HepG2 (cell line): ENCODE measurements at regions of chr20 and their contacts with region 1.

Region 1: GRCh38 chr20:58839474-58839874 is 11.2 kb downstream of the GNAS-AS1 start:
- DNase-seq: peak; percentile 34
- ATAC-seq: peak; percentile 86
- H3K4me3 ChIP-seq: no peak overlapping the region
- H3K27ac ChIP-seq: no peak overlapping the region
- H3K4me1 ChIP-seq: no peaks in the 10 kb centered on the region
- H3K27me3 ChIP-seq: peaks cover 7 to 82% of the 10 kb centered on the region in 2 experiments; a peak in 4 of 5 replicates
- CTCF ChIP-seq: peak; percentile 86
- EP300 ChIP-seq: no peak
- POLR2A ChIP-seq: no peak
- RAD21 ChIP-seq: peak; percentile 72

Region 2: DNA sequence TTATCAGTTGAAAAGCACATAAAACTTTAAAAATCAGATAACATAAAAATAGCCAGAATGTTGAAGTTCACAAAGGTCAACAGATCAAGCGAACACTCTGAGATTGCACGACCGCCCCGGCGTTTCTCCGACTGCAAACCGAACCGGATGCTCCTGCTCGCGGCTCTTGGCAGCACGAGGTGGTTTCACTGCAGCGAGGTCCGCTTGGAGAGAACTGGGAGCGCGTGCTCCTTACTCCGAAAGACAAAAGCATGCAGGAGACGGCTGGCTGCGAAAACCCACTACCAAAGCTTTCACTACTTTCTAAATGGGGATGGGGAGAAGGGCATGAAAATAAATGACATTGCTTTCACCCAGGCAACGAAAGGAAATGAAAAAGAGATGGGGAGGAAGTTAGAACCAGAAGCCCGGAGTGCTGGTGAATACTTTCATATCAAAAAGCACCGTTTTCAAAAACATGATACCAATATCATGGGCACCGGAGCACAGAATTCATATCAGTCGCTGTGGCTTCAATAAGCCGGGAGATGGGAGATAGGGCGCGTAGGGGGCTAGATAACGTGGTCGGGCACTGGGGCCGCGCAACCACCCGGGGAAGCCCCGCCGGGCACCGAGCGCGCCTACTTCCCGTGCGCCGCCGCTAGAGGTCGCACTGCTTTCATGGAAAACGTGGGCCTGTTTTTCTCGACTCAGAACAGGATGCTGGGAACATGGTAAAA is 602.7 kb before region 1 on chr20:
- CTCF ChIA-PET with region 1: interaction called, 6 read pairs
- POLR2A ChIA-PET with region 1: no interaction called
- in situ Hi-C with region 1: loop called (anchors 10 kb)
- intact Hi-C with region 1: no loop called
- DNase-seq: peak; percentile 52
- ATAC-seq: peak; percentile 93
- H3K4me3 ChIP-seq: peak overlapping the region; percentile 10 to 59 (median 43); a peak in 5 of 6 replicates
- H3K27ac ChIP-seq: no peak overlapping the region
- H3K4me1 ChIP-seq: peaks cover 7% of the 10 kb centered on the region
- H3K27me3 ChIP-seq: peaks cover 0 to 12% of the 10 kb centered on the region in 2 experiments; a peak in 2 of 5 replicates
- CTCF ChIP-seq: peak; percentile 99
- EP300 ChIP-seq: no peak
- POLR2A ChIP-seq: no peak
- RAD21 ChIP-seq: peak; percentile 92

Region 3: DNA sequence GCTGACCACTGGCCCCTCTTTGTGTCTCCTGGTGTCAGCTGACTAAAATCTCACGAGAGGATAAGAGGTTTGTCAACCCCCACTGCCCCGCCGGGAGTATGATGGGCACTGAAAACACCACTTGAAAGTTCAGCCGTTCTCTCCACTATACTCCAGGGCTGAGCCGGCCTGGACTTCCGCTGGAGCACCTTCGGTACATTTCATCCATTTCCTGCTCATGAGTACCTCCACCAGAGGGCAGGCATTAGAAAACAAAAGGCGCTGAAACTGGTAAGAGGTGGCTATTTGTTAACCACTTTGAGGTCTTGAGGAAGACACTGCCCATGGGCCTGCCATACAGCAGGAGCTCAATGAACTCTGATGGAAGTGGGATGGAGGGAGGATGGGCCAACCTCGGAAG is 593.1 kb before region 1 on chr20:
- CTCF ChIA-PET with region 1: no interaction called
- POLR2A ChIA-PET with region 1: no interaction called
- in situ Hi-C with region 1: no loop called
- intact Hi-C with region 1: loop called (anchors 5 kb)
- DNase-seq: peak; percentile 61
- ATAC-seq: peak; percentile 75
- H3K4me3 ChIP-seq: no peak overlapping the region
- H3K27ac ChIP-seq: no peak overlapping the region
- H3K4me1 ChIP-seq: peaks cover 2% of the 10 kb centered on the region; the same call in 1 of the 2 replicates
- H3K27me3 ChIP-seq: no peaks in the 10 kb centered on the region
- CTCF ChIP-seq: peak; percentile 71
- EP300 ChIP-seq: no peak
- POLR2A ChIP-seq: no peak
- RAD21 ChIP-seq: peak; percentile 32; the same call in 1 of the 2 replicates

Region 4: GRCh38 chr20:58481481-58482021 is 357.9 kb before region 1 on chr20:
- CTCF ChIA-PET with region 1: interaction called, 12 read pairs
- POLR2A ChIA-PET with region 1: no interaction called
- in situ Hi-C with region 1: loop called (anchors 10 kb)
- intact Hi-C with region 1: no loop called
- DNase-seq: peak; percentile 42
- ATAC-seq: peak; percentile 87
- H3K4me3 ChIP-seq: no peak overlapping the region
- H3K27ac ChIP-seq: no peak overlapping the region
- H3K4me1 ChIP-seq: no peaks in the 10 kb centered on the region
- H3K27me3 ChIP-seq: peaks cover 0 to 21% of the 10 kb centered on the region in 2 experiments; a peak in 1 of 5 replicates
- CTCF ChIP-seq: peak; percentile 66
- EP300 ChIP-seq: no peak
- POLR2A ChIP-seq: no peak
- RAD21 ChIP-seq: peak; percentile 83

Region 5: GRCh38 chr20:60199866-60200265 is 1360.4 kb after region 1 on chr20:
- CTCF ChIA-PET with region 1: no interaction called
- POLR2A ChIA-PET with region 1: no interaction called
- in situ Hi-C with region 1: no loop called
- intact Hi-C with region 1: loop called (anchors 5 kb)
- DNase-seq: no peak
- ATAC-seq: no peak
- H3K4me3 ChIP-seq: no peak overlapping the region
- H3K27ac ChIP-seq: no peak overlapping the region
- H3K4me1 ChIP-seq: no peaks in the 10 kb centered on the region
- H3K27me3 ChIP-seq: no peaks in the 10 kb centered on the region; a peak in 1 of 5 replicates
- CTCF ChIP-seq: no peak
- EP300 ChIP-seq: no peak
- POLR2A ChIP-seq: no peak
- RAD21 ChIP-seq: no peak